ENCODE measurements at regions of chr3 and their contacts with region 1.

Region 1: DNA sequence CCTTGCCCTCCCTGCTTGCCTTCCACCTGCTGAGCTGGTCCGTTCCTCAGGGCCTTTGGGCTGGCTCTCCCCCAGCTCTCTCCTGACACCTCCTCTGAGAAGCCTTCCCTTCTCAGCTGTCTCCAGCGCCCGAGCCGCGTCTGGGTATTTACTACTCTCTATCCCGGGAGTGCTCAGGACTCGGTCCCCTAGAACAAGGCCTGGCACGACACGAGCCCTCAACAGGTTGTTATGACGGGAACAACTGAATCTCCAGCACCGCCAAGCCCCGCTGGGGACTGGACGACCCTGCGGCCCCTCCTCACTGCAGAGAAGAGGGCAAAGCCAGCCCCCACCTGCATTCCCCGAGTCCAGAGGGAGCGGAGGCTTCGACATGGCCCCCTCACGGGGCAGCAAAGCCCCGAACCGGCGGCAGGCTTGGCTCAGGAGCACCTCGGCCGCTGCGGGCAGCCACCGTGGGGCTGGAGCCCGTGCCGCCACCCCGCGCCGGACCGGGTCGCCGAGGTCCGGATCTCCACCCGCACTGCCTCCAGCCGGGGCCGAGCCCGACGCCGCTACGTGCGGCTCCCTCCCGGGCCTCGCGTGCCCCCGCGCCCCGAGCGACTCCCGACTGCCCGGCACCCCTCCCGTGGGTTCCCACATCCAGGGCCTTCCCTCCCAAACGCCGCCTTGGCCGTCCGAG is 792 bp downstream of the TPRA1 start:
- DNase-seq: no peak
- ATAC-seq: peak; percentile 5
- H3K4me3 ChIP-seq: peak overlapping the region; percentile 82 to 84
- H3K27ac ChIP-seq: peak overlapping the region; percentile 65
- H3K4me1 ChIP-seq: peaks cover 18% of the 10 kb centered on the region
- H3K27me3 ChIP-seq: no peaks in the 10 kb centered on the region
- CTCF ChIP-seq: no peak

Region 2: DNA sequence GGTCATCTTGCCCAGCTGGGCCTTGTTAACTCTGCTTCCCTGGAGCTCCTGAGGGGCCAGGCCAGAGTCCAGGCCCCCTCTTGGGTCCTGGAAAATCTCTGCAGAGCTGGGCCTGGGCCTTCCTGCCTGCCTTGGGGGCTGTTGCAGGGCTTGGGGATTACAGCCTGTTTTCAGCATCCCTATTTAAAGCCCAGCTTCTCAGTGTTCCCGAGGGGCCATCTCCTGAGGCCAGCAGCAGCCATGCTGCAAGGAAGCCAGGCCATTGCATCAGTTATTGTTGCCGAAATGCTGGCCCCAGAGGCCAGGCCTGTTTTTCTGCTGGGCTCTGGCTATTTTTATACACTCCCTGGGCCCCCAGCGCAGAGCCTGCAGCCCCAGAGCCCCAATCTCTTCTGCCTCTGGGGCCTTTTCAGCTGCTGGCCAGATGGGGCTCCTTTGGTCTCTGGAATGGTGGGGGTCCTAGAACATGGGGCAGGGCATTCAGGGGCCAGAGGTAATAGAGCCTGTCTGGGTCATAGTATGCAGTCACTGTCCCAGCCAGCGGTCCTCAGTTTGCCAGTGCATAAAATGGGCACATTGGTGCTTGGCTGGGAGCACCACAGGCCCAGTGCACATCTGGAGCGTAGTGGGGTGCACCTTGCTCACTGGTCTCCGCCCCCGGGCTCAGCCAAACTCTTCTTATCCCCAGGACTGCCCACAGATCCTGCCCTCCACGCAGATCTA is 578.3 kb before region 1 on chr3:
- CTCF ChIA-PET with region 1: no interaction called
- POLR2A ChIA-PET with region 1: no interaction called
- in situ Hi-C with region 1: no loop called
- intact Hi-C with region 1: no loop called
- DNase-seq: no peak
- ATAC-seq: no peak
- H3K4me3 ChIP-seq: no peak overlapping the region
- H3K27ac ChIP-seq: peak overlapping the region; percentile 39; the same call in 1 of the 2 replicates
- H3K4me1 ChIP-seq: peaks cover 4% of the 10 kb centered on the region
- H3K27me3 ChIP-seq: no peaks in the 10 kb centered on the region
- CTCF ChIP-seq: no peak

Region 3: GRCh38 chr3:127565711-127566110 is 24.0 kb before region 1 on chr3:
- CTCF ChIA-PET with region 1: no interaction called
- POLR2A ChIA-PET with region 1: interaction called, 15 read pairs
- in situ Hi-C with region 1: no loop called
- intact Hi-C with region 1: no loop called
- DNase-seq: no peak
- ATAC-seq: 0 out of 2 replicates have a peak, but pooled peaks have one; percentile 25
- H3K4me3 ChIP-seq: no peak overlapping the region
- H3K27ac ChIP-seq: no peak overlapping the region
- H3K4me1 ChIP-seq: no peaks in the 10 kb centered on the region; the same call in 1 of the 2 replicates
- H3K27me3 ChIP-seq: 0 out of 2 replicates have a peak, but pooled peaks cover 2% of the 10 kb centered on the region
- CTCF ChIP-seq: no peak

Region 4: DNA sequence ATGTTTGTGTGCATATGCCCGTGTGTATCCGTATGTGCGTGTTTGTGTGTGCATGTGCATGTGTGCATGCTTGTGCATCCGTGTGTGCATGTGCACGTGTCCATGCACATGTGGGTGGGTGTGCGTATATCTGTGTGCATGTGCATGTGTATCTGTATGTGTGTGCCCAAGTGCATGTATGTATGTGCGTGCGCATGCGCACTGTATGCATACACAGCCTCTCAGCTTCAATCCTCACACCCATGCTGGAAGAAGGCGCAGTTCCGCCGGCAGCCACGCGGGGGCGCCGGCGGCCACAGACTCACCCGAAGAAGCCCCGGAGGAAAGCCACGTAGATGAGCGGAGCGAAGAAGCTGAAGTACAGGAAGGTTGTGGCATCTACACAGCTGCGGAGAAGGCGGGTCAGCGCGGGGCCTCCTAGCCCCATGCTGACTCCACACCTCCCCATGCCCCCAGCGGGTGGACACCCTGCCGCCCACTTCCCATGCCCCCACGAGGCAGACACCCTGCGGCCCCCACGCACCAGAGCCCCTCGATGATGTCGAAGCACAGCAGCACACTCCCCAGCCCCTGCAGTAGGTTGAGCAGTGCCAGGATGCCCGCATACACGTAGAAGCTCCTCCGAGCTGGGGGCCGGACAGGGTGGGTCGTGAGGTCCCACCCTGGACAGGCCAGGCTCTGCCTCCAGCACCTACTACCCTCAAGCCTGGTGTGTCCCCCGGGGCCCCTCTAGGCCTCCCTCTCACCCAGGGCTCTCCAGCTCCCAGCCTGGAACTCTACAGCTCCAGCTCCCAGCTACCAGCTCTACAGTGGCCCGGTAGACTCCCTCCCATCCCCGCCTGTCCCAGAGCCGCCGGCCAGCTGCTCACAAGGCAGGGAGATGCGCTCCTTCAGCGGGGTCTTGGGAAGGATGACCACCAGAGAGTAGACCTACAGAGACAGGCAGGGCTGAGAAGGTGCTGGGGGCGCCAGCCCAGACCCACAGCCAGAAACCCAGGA is 14.6 kb before region 1 on chr3:
- CTCF ChIA-PET with region 1: interaction called, 15 read pairs
- POLR2A ChIA-PET with region 1: interaction called, 3 read pairs
- in situ Hi-C with region 1: no loop called
- intact Hi-C with region 1: no loop called
- DNase-seq: peak; percentile 82
- ATAC-seq: peak; percentile 96
- H3K4me3 ChIP-seq: no peak overlapping the region
- H3K27ac ChIP-seq: 0 out of 2 replicates have a peak overlapping the region, but pooled peaks have one; percentile 29
- H3K4me1 ChIP-seq: peaks cover 4% of the 10 kb centered on the region; the same call in 1 of the 2 replicates
- H3K27me3 ChIP-seq: no peaks in the 10 kb centered on the region
- CTCF ChIP-seq: peak; percentile 100

Region 5: DNA sequence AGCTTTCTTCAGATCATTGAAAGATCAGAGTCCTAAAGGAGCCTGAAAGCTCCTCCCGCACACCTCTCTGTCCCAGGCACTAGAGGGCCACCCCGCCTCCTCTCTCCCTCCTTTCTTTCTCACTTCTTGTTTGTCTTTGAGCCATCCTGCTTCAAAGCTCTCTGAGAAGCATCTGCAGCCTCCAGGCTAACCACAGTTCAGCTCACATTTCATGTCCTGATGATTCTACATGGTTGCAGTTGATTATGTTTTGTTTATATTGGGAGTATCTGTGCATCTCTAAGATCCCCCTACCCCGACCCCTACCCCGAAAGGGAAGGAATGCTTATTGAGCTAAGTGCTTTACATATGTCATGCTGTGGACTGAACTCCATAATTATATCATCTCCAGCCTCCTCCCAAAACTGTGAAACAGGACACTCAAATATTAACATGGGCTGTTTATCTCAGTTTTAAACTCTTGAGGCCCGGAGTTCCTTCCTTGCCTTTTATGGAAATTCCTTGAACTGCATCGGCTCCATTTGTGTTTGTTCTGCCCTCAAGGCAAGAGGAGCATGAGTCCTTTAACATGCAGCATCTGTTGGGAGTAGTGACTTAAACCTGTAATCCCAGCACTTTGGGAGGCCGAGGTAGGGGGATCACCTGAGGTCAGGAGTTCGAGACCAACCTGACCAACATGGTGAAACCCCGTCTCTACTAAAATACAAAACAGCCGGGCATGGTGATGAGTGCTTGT is 201.6 kb after region 1 on chr3:
- CTCF ChIA-PET with region 1: no interaction called
- POLR2A ChIA-PET with region 1: no interaction called
- in situ Hi-C with region 1: no loop called
- intact Hi-C with region 1: no loop called
- DNase-seq: no peak
- ATAC-seq: peak; percentile 83
- H3K4me3 ChIP-seq: no peak overlapping the region
- H3K27ac ChIP-seq: no peak overlapping the region
- H3K4me1 ChIP-seq: no peaks in the 10 kb centered on the region
- H3K27me3 ChIP-seq: no peaks in the 10 kb centered on the region
- CTCF ChIP-seq: no peak

Region 6: DNA sequence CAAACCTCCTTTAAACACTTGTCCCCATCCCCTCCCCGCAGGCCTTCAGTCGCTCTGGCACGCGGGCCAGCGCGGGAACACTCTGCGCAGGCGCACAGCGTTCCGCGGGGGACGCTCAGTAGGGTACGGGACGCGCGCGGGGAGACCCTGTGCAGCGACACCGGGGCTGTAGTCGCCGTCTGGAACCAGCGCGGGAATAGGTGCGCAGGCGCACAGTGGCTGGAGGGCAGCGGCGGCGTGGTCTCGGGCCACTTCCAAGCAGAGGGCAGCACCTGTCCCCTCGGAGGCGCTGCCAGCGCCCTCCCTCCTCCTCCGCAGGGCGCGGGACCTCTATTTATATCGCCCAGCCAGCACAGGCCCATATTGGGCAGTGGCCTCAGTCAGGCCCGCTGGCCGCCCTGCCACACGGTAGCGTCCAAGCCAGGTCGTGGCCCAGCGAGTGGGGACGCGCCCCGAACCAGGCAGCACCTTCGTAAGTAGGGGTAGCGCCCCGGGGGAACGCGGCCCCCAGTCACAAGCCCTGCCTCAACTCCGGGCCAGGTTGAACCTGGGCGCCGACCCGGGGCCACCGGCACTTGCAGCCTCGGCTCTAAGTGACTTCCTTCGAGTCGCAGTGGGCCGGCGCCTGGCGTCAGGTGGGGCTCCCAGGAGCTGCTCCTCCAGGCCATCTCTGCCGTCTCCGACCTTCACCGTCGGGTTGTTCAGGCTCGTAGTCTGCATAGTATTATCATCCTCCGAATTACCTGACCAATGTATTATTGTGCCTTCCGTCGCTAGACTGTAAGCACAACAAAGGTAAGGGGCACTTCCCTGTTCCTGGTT is 325.6 kb after region 1 on chr3 and contains the start of gene KBTBD12:
- CTCF ChIA-PET with region 1: no interaction called
- POLR2A ChIA-PET with region 1: no interaction called
- in situ Hi-C with region 1: no loop called
- intact Hi-C with region 1: no loop called
- DNase-seq: no peak
- ATAC-seq: peak; percentile 86
- H3K4me3 ChIP-seq: peak within 1 kb of the TSS; percentile 37 to 56
- H3K27ac ChIP-seq: no peak within 1 kb of the TSS
- H3K4me1 ChIP-seq: peaks cover 7% of the 10 kb centered on the region; the same call in 1 of the 2 replicates
- H3K27me3 ChIP-seq: peaks cover 23% of the 10 kb centered on the region
- CTCF ChIP-seq: no peak
- total RNA-seq, gene KBTBD12: 0.28 TPM

Measured in Panc1 (cell line).